Gastrocnemius medialis (tissue), 4 donors: ENCODE measurements at regions of chr13 and their contacts with region 1.

Region 1: DNA sequence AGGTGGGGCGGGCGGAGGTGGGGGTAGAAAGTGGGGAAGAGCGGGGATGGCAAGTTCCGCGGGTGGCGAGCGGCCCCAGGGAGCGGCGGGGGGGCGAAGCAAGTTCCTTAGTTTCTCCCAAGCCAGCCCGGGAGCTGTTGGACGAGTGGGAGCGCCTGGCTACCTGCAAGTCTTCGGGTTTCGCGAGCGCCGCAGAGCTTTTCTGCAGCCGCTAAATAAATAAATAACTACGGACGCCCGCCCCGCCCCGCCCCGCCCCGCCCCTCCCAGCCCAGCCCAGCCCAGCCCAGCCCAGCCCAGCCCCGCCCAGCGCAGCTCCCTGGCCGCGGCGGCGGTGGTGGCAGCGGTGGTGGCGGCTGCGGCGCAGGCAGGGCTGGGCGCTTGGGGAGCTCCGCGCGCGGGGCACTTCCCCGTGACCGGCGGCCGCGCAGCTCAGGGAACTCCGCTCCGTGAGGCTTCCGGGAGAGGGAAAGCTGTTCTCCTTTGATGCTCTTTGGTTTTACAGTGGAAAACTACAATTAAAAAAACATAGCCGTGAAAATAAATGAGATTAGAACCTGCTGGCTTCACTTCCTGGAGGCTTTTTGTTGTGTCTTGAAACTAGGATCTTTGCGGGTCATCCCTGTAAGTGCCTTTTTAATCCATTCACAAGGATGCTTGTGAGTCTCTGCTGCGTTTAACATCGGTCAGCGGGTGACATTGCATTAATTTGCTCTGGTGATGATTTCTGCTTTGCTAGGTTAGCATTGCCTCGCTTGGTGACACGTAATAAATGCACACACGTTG is at the start of gene UBE2L5:
- DNase-seq: peak; percentile 65 to 76
- ATAC-seq: peak; percentile 64 to 69
- H3K4me3 ChIP-seq: peak within 1 kb of the TSS; percentile 64 to 95 (median 77)
- H3K27ac ChIP-seq: peak within 1 kb of the TSS; percentile 95 to 99 (median 98)
- H3K4me1 ChIP-seq: peaks cover 9 to 10% of the 10 kb centered on the region in 2 donors
- H3K27me3 ChIP-seq: no peaks in the 10 kb centered on the region
- CTCF ChIP-seq: no peak
- POLR2A ChIP-seq: peak; percentile 70 to 77
- total RNA-seq, gene UBE2L5: not detected

Region 2: DNA sequence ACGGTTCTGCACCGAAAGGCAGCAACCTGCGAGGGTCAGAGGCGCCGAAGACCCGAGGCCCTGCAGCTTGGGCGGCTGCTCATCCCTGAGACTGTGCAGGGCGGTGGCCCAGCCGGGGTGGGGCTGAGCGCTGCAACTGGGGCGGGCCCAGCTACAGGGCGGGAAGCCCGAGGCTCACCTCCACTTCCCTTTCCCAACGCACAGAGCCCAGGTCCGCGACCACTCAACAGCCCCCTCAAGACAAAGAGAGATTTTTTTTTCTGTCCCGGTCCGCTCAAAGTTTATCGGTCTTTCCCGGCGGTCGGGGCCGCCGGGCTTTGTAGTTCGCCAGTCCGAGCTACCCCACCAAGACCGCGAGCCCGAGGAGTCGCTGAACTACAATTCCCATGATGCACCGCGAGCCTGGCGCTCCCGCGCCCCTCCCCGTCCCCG is 115.5 kb before region 1 on chr13:
- in situ Hi-C with region 1: no loop called
- intact Hi-C with region 1: loop called (anchors 1 kb)
- DNase-seq: peak; percentile 86 to 88
- ATAC-seq: peak; percentile 98 to 99
- H3K4me3 ChIP-seq: peak overlapping the region; percentile 85 to 98 (median 91)
- H3K27ac ChIP-seq: peak overlapping the region; percentile 87 to 96 (median 90)
- H3K4me1 ChIP-seq: peaks cover 15 to 16% of the 10 kb centered on the region in 2 donors
- H3K27me3 ChIP-seq: no peaks in the 10 kb centered on the region
- CTCF ChIP-seq: no peak
- POLR2A ChIP-seq: no peak

Region 3: DNA sequence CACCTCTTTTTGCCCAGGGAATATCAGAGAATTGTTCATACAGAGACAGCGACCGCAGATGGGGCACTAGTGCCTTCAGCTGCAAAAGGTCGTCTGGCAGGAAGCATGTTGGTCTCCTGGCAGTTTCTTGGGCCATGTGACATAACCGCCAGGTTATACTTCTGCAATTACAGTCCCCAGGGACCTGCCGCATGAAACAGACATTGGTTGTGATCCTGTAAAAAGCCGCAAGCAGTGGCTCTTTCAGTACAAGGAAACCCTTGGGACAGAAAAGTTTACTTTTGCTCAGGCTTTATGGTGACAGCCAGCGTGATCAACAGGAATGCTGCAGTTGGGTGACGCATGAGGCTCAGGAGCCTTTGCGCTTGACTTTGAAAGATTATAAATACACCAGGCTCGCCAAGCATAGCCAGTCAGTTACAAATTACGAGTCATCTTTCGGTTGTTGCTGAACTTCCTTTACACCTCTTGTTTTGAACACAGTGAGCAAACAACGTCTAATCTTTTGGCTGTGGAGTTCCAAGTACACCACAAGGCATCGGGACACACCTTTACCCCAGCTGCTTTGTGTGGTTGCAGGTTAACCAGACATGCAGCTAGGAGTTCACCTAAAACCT is 50.5 kb before region 1 on chr13:
- in situ Hi-C with region 1: no loop called
- intact Hi-C with region 1: no loop called
- DNase-seq: no peak
- ATAC-seq: no peak
- H3K4me3 ChIP-seq: no peak overlapping the region
- H3K27ac ChIP-seq: no peak overlapping the region
- H3K4me1 ChIP-seq: no peaks in the 10 kb centered on the region
- H3K27me3 ChIP-seq: no peaks in the 10 kb centered on the region
- CTCF ChIP-seq: no peak
- POLR2A ChIP-seq: no peak

Region 4: DNA sequence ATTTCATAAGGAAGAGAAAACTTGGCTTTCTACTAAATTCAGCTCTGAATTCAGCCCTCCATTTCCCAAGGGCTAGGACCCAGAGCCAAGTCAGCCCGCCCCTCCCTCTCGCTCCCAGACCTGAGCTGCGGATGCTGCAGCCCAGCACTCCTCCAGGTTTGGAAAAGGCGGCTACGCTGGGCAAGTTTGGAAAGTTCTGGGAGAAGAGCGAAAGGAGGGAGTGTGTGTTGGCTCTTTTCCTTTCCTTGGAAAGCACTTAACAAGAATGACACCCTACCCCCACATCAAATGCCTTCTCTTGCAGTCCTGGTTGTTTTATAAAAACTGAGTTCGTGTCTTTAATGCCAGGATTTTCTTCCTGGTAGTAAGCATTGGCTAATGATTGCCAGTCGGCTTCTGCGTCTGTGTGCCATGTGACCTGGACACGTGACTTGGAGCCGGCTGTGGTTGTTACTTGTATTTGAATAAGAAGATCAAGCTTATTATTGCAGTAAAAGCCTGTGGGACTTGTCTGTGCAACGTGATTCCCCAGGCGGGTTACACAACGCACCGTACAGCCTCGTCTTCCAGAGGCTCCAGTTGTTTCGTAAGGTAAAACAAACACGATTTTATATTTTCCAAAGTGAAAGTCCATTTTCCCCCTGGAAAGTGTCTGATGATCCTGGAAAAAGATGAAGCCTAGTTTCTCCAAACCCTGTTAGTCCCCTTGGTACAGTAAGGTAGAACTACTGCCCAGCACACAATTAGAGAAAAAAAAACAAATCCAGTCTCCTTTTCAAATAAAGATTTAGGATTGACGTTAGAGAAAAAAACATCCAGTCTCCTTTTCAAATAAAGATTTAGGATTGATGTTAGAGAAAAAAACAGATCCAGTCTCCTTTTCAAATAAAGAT is 26.8 kb before region 1 on chr13:
- in situ Hi-C with region 1: no loop called
- intact Hi-C with region 1: loop called (anchors 2 kb)
- DNase-seq: peak; percentile 88 to 96
- ATAC-seq: peak; percentile 95 to 97
- H3K4me3 ChIP-seq: peak overlapping the region; percentile 59 to 80 (median 69)
- H3K27ac ChIP-seq: peak overlapping the region; percentile 72 to 86 (median 83)
- H3K4me1 ChIP-seq: peaks cover 0 to 7% of the 10 kb centered on the region in 2 donors
- H3K27me3 ChIP-seq: no peaks in the 10 kb centered on the region
- CTCF ChIP-seq: no peak
- POLR2A ChIP-seq: peak; percentile 28 to 41

Region 5: DNA sequence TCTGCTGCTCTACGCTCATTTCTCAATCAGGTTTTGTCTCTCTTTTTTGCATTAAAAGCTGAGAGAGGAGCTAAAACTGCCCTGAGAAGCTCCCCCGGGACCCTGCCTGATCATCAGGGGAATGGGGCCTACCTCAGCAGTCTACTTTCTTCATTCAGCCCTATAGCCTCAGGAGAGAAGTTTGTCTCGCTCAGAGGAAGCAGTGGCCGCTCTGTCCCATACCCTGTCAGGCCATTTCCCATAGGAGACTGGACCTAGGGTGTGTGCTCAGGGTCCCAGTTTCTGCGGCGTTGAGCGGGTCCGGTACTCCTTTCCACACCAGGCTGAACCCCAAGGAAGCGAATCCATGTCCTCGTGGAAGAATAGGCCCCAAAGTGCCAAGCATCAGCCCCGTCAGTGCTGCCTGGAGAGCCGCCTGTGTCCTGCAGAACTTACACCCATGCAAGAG is 21.7 kb after region 1 on chr13:
- in situ Hi-C with region 1: no loop called
- intact Hi-C with region 1: loop called (anchors 2 kb)
- DNase-seq: no peak
- ATAC-seq: no peak
- H3K4me3 ChIP-seq: no peak overlapping the region
- H3K27ac ChIP-seq: no peak overlapping the region
- H3K4me1 ChIP-seq: peaks cover 12 to 15% of the 10 kb centered on the region in 2 donors
- H3K27me3 ChIP-seq: no peaks in the 10 kb centered on the region
- CTCF ChIP-seq: no peak
- POLR2A ChIP-seq: no peak

Region 6: DNA sequence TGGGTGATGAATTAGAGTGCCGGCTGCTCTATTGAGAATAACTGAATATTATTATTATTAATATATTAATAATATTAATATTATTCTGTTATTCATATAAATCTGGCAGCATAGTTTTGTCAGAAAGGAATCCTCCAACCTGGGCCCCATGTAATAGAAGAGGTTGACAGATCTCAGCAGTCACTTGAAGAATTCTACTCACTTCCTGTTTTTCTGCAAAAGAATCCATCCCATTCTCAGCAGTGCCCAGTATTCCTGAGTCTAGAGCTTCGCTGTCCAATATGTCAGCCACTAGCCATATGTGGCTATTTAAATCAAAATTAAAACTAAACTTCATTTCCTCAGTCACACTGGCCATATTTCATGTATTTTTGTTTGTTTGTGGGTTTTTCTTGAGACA is 123.1 kb after region 1 on chr13:
- in situ Hi-C with region 1: no loop called
- intact Hi-C with region 1: no loop called
- DNase-seq: no peak
- ATAC-seq: no peak
- H3K4me3 ChIP-seq: no peak overlapping the region
- H3K27ac ChIP-seq: no peak overlapping the region
- H3K4me1 ChIP-seq: no peaks in the 10 kb centered on the region
- H3K27me3 ChIP-seq: no peaks in the 10 kb centered on the region
- CTCF ChIP-seq: no peak
- POLR2A ChIP-seq: no peak

Region 7: GRCh38 chr13:31361673-31362072 is 939.4 kb after region 1 on chr13:
- in situ Hi-C with region 1: no loop called
- intact Hi-C with region 1: no loop called
- DNase-seq: no peak
- ATAC-seq: no peak
- H3K4me3 ChIP-seq: no peak overlapping the region
- H3K27ac ChIP-seq: no peak overlapping the region
- H3K4me1 ChIP-seq: no peaks in the 10 kb centered on the region
- H3K27me3 ChIP-seq: no peaks in the 10 kb centered on the region
- CTCF ChIP-seq: no peak
- POLR2A ChIP-seq: no peak